ENCODE measurements at regions of chr1 and their contacts with region 1.

Region 1: DNA sequence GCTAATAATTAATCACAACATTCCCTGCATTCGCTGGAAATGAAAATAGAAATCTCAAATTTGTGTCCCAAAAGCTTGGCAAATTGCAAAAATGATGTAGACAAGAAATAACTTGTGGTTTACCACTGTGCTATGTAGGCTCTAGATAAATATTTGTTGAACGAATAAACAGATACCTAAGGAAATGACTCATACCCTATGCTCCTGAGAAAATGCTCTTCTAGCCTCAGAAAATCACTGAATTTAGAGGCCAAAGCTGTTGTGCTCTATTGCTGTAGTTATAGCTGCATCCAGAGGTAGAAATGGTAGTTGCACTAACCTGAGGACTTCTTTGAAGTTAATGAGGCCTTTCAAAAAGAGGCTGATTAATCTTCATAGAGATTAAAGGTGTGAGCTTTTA is 142.0 kb upstream of the ZNHIT6 start:
- DNase-seq: peak; percentile 96
- ATAC-seq: peak; percentile 98
- H3K4me3 ChIP-seq: no peak overlapping the region
- H3K27ac ChIP-seq: peak overlapping the region; percentile 89
- H3K4me1 ChIP-seq: peaks cover 26% of the 10 kb centered on the region
- H3K27me3 ChIP-seq: no peaks in the 10 kb centered on the region
- CTCF ChIP-seq: peak; percentile 77

Region 2: GRCh38 chr1:85398391-85399064 is 451.7 kb before region 1 on chr1:
- CTCF ChIA-PET with region 1: no interaction called
- POLR2A ChIA-PET with region 1: no interaction called
- intact Hi-C with region 1: loop called (anchors 1 kb)
- DNase-seq: peak; percentile 72
- ATAC-seq: peak; percentile 81
- H3K4me3 ChIP-seq: no peak overlapping the region
- H3K27ac ChIP-seq: no peak overlapping the region
- H3K4me1 ChIP-seq: peaks cover 18% of the 10 kb centered on the region; the same call in 1 of the 2 replicates
- H3K27me3 ChIP-seq: no peaks in the 10 kb centered on the region
- CTCF ChIP-seq: peak; percentile 77

Region 3: GRCh38 chr1:85544689-85545215 is 305.5 kb before region 1 on chr1:
- CTCF ChIA-PET with region 1: no interaction called
- POLR2A ChIA-PET with region 1: no interaction called
- intact Hi-C with region 1: loop called (anchors 1 kb)
- DNase-seq: peak; percentile 99
- ATAC-seq: peak; percentile 87
- H3K4me3 ChIP-seq: peak overlapping the region; percentile 25; the same call in 1 of the 2 replicates
- H3K27ac ChIP-seq: peak overlapping the region; percentile 52
- H3K4me1 ChIP-seq: peaks cover 55% of the 10 kb centered on the region
- H3K27me3 ChIP-seq: no peaks in the 10 kb centered on the region
- CTCF ChIP-seq: no peak

Region 4: GRCh38 chr1:85607126-85607912 is 242.9 kb before region 1 on chr1:
- CTCF ChIA-PET with region 1: interaction called, 5 read pairs
- POLR2A ChIA-PET with region 1: no interaction called
- intact Hi-C with region 1: loop called (anchors 1 kb)
- DNase-seq: peak; percentile 99
- ATAC-seq: peak; percentile 84
- H3K4me3 ChIP-seq: no peak overlapping the region
- H3K27ac ChIP-seq: peak overlapping the region; percentile 85
- H3K4me1 ChIP-seq: peaks cover 58% of the 10 kb centered on the region
- H3K27me3 ChIP-seq: no peaks in the 10 kb centered on the region
- CTCF ChIP-seq: no peak

Region 5: DNA sequence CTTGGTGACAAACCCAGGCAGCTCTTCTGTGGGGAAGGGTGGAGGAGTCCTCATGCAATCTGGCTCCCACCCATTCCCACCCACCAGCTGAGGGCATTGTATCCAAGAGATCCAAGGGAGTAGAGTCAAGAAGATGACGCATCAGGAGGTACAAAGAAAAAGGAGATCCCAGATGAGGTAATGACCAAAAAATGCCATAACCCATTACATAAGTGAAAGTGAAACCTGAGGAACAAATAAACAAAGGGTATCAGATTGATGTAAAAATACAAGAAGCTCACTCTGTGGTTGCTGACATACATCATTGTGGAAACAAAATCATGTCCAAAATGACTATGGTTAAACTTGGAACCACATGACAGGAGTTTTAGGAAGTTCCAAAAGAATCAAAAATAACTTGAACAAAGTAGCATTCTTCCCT is 227.2 kb before region 1 on chr1:
- CTCF ChIA-PET with region 1: no interaction called
- POLR2A ChIA-PET with region 1: no interaction called
- intact Hi-C with region 1: no loop called
- DNase-seq: peak; percentile 92
- ATAC-seq: peak; percentile 78
- H3K4me3 ChIP-seq: no peak overlapping the region
- H3K27ac ChIP-seq: peak overlapping the region; percentile 75
- H3K4me1 ChIP-seq: peaks cover 23% of the 10 kb centered on the region
- H3K27me3 ChIP-seq: no peaks in the 10 kb centered on the region
- CTCF ChIP-seq: no peak

Region 6: DNA sequence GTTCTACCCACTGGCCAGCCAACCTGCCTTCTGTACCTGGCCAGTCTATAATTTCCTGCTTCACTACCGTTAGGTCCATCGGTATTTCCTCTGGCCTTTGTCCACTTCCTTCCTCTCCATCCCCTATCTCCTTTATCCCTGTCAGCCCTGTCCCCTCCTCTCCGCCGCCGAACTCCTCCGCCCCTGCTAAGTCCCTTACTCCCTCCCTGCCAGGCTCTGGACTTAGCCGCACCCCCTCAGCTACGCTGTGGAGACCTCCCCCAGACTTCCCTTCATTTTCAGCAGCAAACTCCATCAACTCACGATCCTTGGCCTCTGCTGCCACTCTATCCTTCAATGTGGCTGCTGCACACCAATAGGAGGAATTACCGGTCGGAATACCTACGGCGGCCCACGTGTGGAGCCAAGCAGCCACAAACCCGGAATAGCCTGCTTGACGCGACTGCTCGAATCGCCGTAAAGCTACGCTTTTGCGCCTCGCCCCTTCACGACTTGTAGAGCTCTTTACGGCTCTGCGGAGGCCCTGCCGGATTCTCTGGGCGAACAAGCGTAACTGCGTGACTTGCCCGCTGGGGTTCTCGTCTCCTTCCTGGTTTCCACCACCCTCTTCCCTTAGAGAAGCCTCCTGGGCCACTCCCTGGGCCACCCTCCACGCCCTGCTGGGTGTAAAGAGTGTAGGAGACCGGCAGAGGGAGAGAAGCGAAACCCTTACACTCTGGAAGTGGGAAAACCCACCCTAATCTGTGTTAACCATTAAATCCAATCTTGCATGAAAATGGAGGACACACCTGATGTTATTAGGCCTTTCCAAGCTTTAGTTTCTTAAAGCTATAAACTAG is 142.0 kb before region 1 on chr1 and contains the start of gene ZNHIT6:
- CTCF ChIA-PET with region 1: interaction called, 20 read pairs
- POLR2A ChIA-PET with region 1: interaction called, 16 read pairs
- intact Hi-C with region 1: loop called (anchors 1 kb)
- DNase-seq: peak; percentile 97
- ATAC-seq: peak; percentile 90
- H3K4me3 ChIP-seq: peak within 1 kb of the TSS; percentile 92
- H3K27ac ChIP-seq: peak within 1 kb of the TSS; percentile 69
- H3K4me1 ChIP-seq: peaks cover 22% of the 10 kb centered on the region
- H3K27me3 ChIP-seq: no peaks in the 10 kb centered on the region
- CTCF ChIP-seq: peak; percentile 55
- total RNA-seq, gene ZNHIT6: 18.3 and 21.1 TPM in 2 replicates

Region 7: GRCh38 chr1:85818371-85818770 is 31.9 kb before region 1 on chr1:
- CTCF ChIA-PET with region 1: no interaction called
- POLR2A ChIA-PET with region 1: no interaction called
- intact Hi-C with region 1: loop called (anchors 1 kb)
- DNase-seq: peak; percentile 89
- ATAC-seq: peak; percentile 95
- H3K4me3 ChIP-seq: peak overlapping the region; percentile 6
- H3K27ac ChIP-seq: peak overlapping the region; percentile 78
- H3K4me1 ChIP-seq: peaks cover 53% of the 10 kb centered on the region
- H3K27me3 ChIP-seq: no peaks in the 10 kb centered on the region
- CTCF ChIP-seq: no peak

Measured in PC-3 (cell line).